ENCODE measurements at regions of chr12 and their contacts with region 1.

Region 1: GRCh38 chr12:116263844-116264243 is 13.6 kb downstream of the MED13L start:
- DNase-seq: no peak
- ATAC-seq: no peak
- H3K4me3 ChIP-seq: no peak overlapping the region
- H3K4me3 Mint-ChIP-seq: peak overlapping the region in 4 of 10 donors; percentile 1 to 40 (median 19)
- H3K27ac ChIP-seq: peak overlapping the region; percentile 6
- H3K27ac Mint-ChIP-seq: peak overlapping the region in 5 of 9 donors; percentile 21 to 50 (median 25)
- H3K4me1 ChIP-seq: peaks cover 22 to 46% of the 10 kb centered on the region in 2 donors
- H3K4me1 Mint-ChIP-seq: peaks cover 0 to 49% (median 30%) of the 10 kb centered on the region in 7 donors
- H3K27me3 ChIP-seq: no peaks in the 10 kb centered on the region
- H3K27me3 Mint-ChIP-seq: no peaks in the 10 kb centered on the region

Region 2: GRCh38 chr12:116244001-116244400 is 19.8 kb before region 1 on chr12:
- CTCF ChIA-PET with region 1: interaction called, 3 read pairs
- POLR2A ChIA-PET with region 1: interaction called, 4 read pairs
- intact Hi-C with region 1: loop called in 1 of 2 experiments (anchors 2 kb)
- DNase-seq: peak in 1 of 9 donors; percentile 10
- ATAC-seq: peak; percentile 70
- H3K4me3 ChIP-seq: no peak overlapping the region
- H3K4me3 Mint-ChIP-seq: peak overlapping the region in 6 of 10 donors; percentile 9 to 67 (median 48)
- H3K27ac ChIP-seq: no peak overlapping the region
- H3K27ac Mint-ChIP-seq: peak overlapping the region in 7 of 9 donors; percentile 3 to 92 (median 63)
- H3K4me1 ChIP-seq: peaks cover 0 to 38% of the 10 kb centered on the region in 2 donors
- H3K4me1 Mint-ChIP-seq: peaks cover 56 to 95% (median 84%) of the 10 kb centered on the region in 7 donors
- H3K27me3 ChIP-seq: no peaks in the 10 kb centered on the region
- H3K27me3 Mint-ChIP-seq: no peaks in the 10 kb centered on the region

Measured in naive thymus-derived CD4-positive, alpha-beta T cell (primary cell).